Heart right ventricle (tissue), 16 donors: ENCODE measurements at regions of chrX and their contacts with region 1.

Region 1: GRCh38 chrX:13212191-13212651 is 107.6 kb downstream of the ATXN3L start:
- DNase-seq: no peak
- ATAC-seq: peak in 7 of 8 donors; percentile 62 to 83 (median 74)
- H3K4me3 ChIP-seq: no peak overlapping the region
- H3K27ac ChIP-seq: peak overlapping the region in 8 of 10 donors; percentile 15 to 78 (median 51)
- H3K4me1 ChIP-seq: peaks cover 0 to 21% (median 9%) of the 10 kb centered on the region in 9 donors
- H3K27me3 ChIP-seq: peaks cover 0 to 16% (median 0%) of the 10 kb centered on the region in 7 donors
- CTCF ChIP-seq: no peak

Region 2: DNA sequence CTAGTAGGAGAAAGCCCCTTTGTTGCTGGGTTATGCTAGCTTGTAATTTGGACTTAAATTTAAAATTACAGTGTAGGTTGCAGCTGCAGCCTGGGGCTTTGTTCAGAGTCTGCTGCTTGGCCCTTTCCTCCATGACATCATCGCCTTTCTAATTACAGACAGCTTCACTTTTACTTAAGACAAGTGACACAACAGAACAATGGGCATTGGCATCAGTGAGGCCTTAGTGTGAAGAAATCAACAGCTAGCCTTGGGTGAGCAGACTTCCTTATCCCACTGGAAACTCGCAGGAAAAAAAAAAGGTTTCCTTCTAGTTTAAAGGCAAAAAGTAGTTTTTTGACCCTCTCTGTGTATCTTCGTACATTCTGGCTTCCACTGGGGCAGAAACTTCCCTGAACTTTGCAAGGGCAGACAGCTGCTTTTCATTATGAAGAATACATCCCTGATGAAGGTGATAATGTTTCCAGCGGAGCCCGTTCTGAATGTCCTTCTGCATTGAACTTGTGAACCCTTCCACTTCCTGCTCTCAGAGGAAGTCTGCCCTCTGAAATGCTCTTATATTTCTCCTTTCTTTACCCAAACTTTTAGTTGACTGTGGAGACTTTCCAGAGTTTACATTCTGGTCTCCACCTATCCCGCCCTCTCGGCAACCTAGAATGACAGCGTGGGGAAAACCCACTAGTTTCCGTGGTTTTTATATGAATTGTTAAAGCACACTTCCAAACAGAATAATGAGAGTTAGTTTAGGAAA is 44.6 kb before region 1 on chrX:
- intact Hi-C with region 1: loop called in 1 of 10 experiments (anchors 10 kb)
- DNase-seq: peak in 1 of 2 donors; percentile 45
- ATAC-seq: peak; percentile 74 to 96 (median 88)
- H3K4me3 ChIP-seq: no peak overlapping the region
- H3K27ac ChIP-seq: peak overlapping the region; percentile 50 to 88 (median 74)
- H3K4me1 ChIP-seq: peaks cover 2 to 46% (median 16%) of the 10 kb centered on the region in 9 donors
- H3K27me3 ChIP-seq: peaks cover 0 to 17% (median 0%) of the 10 kb centered on the region in 7 donors
- CTCF ChIP-seq: no peak